ENCODE measurements at regions of chr19 and their contacts with region 1.

Region 1: GRCh38 chr19:13150187-13150930 is at the starts of genes IER2 and STX10:
- DNase-seq: peak; percentile 98 to 99
- ATAC-seq: peak; percentile 85
- H3K4me3 ChIP-seq: peak within 1 kb of the TSS; percentile 75 to 82
- H3K27ac ChIP-seq: peak within 1 kb of the TSS; percentile 92 to 93
- H3K4me1 ChIP-seq: no peaks in the 10 kb centered on the region
- H3K27me3 ChIP-seq: peaks cover 0 to 3% of the 10 kb centered on the region in 2 donors
- total RNA-seq, gene IER2: 143 to 239 TPM
- total RNA-seq, gene STX10: 33.0 to 47.4 TPM

Region 2: GRCh38 chr19:13117772-13118423 is 32.5 kb before region 1 on chr19 and contains the start of gene NACC1:
- intact Hi-C with region 1: loop called in 1 of 2 experiments (anchors 2 kb)
- DNase-seq: peak; percentile 93 to 95
- ATAC-seq: peak; percentile 97
- H3K4me3 ChIP-seq: peak within 1 kb of the TSS; percentile 86 to 94
- H3K27ac ChIP-seq: peak within 1 kb of the TSS in 1 of 2 donors; percentile 38
- H3K4me1 ChIP-seq: peaks cover 0 to 2% of the 10 kb centered on the region in 2 donors
- H3K27me3 ChIP-seq: no peaks in the 10 kb centered on the region
- total RNA-seq, gene NACC1: 26.0 to 37.4 TPM

Region 3: DNA sequence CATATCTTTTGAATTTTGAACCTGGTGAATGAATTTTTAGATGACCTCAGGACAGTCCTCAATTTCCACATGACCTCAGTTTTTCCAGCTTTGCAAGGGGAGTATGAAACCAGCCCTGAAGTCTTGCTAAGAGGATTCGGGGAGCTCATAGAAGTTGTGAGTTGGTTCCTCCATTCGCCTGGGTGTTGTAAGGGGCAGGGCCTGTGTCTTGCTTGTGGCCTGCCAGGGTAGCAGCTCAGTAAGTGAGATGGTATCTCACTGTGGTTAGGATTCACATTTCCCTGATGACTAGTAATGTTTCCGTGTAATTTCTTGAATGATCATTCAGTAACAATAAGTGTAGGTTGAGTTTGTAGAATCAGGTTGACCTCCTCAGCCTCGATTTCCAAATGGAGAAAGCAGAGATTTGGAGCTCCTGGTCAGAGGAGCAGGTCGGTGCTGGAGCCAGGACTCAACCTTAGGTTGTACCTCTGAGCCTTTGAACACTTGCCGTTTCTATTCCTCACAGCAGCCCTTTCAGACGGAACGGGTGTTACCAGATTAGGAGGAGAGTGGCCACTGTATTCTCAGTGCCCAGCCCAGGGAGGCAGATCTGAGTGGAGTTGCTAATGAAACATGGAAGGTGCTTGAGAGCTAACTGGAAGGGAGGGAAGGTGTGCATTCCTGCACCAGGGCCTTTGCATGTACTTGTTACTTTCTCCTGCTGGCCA is 17.7 kb before region 1 on chr19:
- intact Hi-C with region 1: no loop called
- DNase-seq: no peak
- ATAC-seq: no peak
- H3K4me3 ChIP-seq: no peak overlapping the region
- H3K27ac ChIP-seq: no peak overlapping the region
- H3K4me1 ChIP-seq: no peaks in the 10 kb centered on the region
- H3K27me3 ChIP-seq: no peaks in the 10 kb centered on the region

Region 4: GRCh38 chr19:13846557-13847406 is 696.4 kb after region 1 on chr19:
- intact Hi-C with region 1: loop called in 1 of 2 experiments (anchors 5 kb)
- DNase-seq: peak; percentile 96 to 97
- ATAC-seq: peak; percentile 76
- H3K4me3 ChIP-seq: no peak overlapping the region
- H3K27ac ChIP-seq: peak overlapping the region; percentile 99 to 100
- H3K4me1 ChIP-seq: no peaks in the 10 kb centered on the region
- H3K27me3 ChIP-seq: no peaks in the 10 kb centered on the region